H1 (cell line): ENCODE measurements at regions of chr12 and their contacts with region 1.

Region 1: DNA sequence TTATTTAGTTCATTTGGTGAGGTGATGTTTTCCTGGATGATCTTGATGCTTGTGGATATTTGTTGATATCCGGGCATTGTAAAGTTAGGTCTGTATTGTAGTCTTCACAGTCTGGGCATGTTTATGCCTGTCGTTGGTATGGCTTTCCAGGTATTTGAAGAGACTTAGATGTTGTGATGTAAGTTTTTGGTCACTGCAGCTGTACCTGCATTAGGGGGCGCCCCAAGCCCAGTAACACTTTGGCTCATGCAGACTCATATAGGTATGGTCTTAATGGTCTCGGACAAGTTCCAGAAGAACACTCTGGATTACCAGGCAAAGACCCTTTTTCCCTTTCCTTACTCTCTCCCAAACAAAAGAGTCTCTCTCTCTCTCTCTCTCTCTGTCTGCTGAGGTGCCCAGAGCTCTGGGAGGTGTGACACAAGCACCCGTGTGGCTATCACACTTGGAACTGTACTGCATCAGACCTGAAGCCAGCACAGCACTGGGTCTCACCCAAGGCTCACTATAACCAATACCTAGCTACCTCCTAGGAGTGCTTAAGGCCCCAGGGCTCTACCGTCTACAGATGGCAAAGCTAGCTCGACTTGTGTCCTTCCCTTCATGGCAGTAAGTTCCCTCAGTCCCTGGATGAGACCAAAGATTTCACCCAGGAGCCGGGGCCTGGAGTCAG is 425.8 kb upstream of the ATXN7L3B start:
- DNase-seq: peak; percentile 36 to 66
- H3K4me3 ChIP-seq: no peak overlapping the region
- H3K27ac ChIP-seq: no peak overlapping the region
- H3K4me1 ChIP-seq: no peaks in the 10 kb centered on the region
- H3K27me3 ChIP-seq: no peaks in the 10 kb centered on the region
- CTCF ChIP-seq: peak; percentile 54 to 86 (median 84)
- EP300 ChIP-seq: no peak
- POLR2A ChIP-seq: no peak
- RAD21 ChIP-seq: peak; percentile 95

Region 2: GRCh38 chr12:74085571-74085970 is 26.3 kb before region 1 on chr12:
- CTCF ChIA-PET with region 1: no interaction called
- POLR2A ChIA-PET with region 1: no interaction called
- DNase-seq: no peak
- H3K4me3 ChIP-seq: no peak overlapping the region
- H3K27ac ChIP-seq: no peak overlapping the region
- H3K4me1 ChIP-seq: no peaks in the 10 kb centered on the region
- H3K27me3 ChIP-seq: no peaks in the 10 kb centered on the region
- CTCF ChIP-seq: no peak
- EP300 ChIP-seq: no peak
- POLR2A ChIP-seq: no peak
- RAD21 ChIP-seq: no peak

Region 3: DNA sequence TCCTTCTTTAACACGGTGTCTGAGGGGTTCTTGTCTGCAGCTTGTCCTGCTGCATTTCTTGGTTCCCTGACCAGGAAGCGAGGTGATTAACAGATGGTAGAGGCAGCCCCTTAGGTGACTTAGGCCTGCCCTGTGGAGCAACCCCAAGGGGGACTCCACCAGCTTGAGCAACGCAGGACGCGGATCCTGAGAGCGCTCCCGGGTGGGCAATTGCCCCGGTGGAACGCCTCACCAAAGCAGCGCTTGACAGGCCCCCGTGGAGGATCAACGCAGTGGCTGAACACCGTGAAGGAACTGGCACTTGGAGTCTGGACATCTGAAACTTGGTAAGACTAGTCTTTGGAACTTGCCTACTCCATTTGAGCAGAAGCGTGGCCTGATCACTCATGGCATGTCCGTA is 152.9 kb after region 1 on chr12:
- CTCF ChIA-PET with region 1: interaction called, 11 read pairs
- POLR2A ChIA-PET with region 1: no interaction called
- DNase-seq: no peak
- H3K4me3 ChIP-seq: no peak overlapping the region
- H3K27ac ChIP-seq: no peak overlapping the region
- H3K4me1 ChIP-seq: peaks cover 0 to 2% (median under 1%) of the 10 kb centered on the region in 4 experiments; a peak in 3 of 7 replicates
- H3K27me3 ChIP-seq: no peaks in the 10 kb centered on the region
- CTCF ChIP-seq: no peak
- EP300 ChIP-seq: no peak
- POLR2A ChIP-seq: no peak
- RAD21 ChIP-seq: no peak

Region 4: GRCh38 chr12:74317078-74317601 is 205.3 kb after region 1 on chr12:
- CTCF ChIA-PET with region 1: interaction called, 143 read pairs
- POLR2A ChIA-PET with region 1: no interaction called
- DNase-seq: no peak
- H3K4me3 ChIP-seq: no peak overlapping the region
- H3K27ac ChIP-seq: no peak overlapping the region
- H3K4me1 ChIP-seq: peaks cover 0 to 4% (median 0%) of the 10 kb centered on the region in 4 experiments; a peak in 1 of 7 replicates
- H3K27me3 ChIP-seq: no peaks in the 10 kb centered on the region
- CTCF ChIP-seq: peak; percentile 15 to 71 (median 67)
- EP300 ChIP-seq: no peak
- POLR2A ChIP-seq: no peak
- RAD21 ChIP-seq: peak; percentile 89 to 93

Region 5: DNA sequence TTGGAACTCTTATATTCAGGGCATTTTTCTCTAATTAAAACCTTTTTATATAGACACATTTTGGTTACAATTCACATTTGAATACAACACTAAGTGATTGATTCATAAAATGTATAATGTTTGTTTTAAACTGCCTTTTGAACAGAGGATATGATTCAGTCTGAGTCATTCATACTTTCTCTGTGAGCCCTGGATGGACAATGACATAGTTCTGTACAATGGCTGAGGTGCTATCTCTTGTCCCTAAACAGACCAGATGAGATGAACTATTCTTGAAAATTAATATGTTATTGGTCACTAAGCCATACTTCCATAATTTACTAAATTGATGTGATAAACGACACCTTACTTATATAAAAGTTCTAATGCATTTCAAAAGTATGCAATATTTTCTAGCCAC is 226.1 kb after region 1 on chr12:
- CTCF ChIA-PET with region 1: no interaction called
- POLR2A ChIA-PET with region 1: no interaction called
- DNase-seq: no peak
- H3K4me3 ChIP-seq: no peak overlapping the region
- H3K27ac ChIP-seq: no peak overlapping the region
- H3K4me1 ChIP-seq: no peaks in the 10 kb centered on the region; a peak in 2 of 7 replicates
- H3K27me3 ChIP-seq: no peaks in the 10 kb centered on the region
- CTCF ChIP-seq: no peak
- EP300 ChIP-seq: no peak
- POLR2A ChIP-seq: no peak
- RAD21 ChIP-seq: no peak

Region 6: GRCh38 chr12:74365178-74365964 is 253.5 kb after region 1 on chr12:
- CTCF ChIA-PET with region 1: interaction called, 11 read pairs
- POLR2A ChIA-PET with region 1: no interaction called
- DNase-seq: peak in 1 of 2 experiments; percentile 60
- H3K4me3 ChIP-seq: no peak overlapping the region
- H3K27ac ChIP-seq: no peak overlapping the region
- H3K4me1 ChIP-seq: no peaks in the 10 kb centered on the region
- H3K27me3 ChIP-seq: no peaks in the 10 kb centered on the region
- CTCF ChIP-seq: peak; percentile 43 to 73 (median 61)
- EP300 ChIP-seq: no peak
- POLR2A ChIP-seq: no peak
- RAD21 ChIP-seq: peak; percentile 81 to 87

Region 7: GRCh38 chr12:74415633-74416032 is 303.8 kb after region 1 on chr12:
- CTCF ChIA-PET with region 1: interaction called, 68 read pairs
- POLR2A ChIA-PET with region 1: no interaction called
- DNase-seq: no peak
- H3K4me3 ChIP-seq: no peak overlapping the region
- H3K27ac ChIP-seq: no peak overlapping the region
- H3K4me1 ChIP-seq: no peaks in the 10 kb centered on the region
- H3K27me3 ChIP-seq: no peaks in the 10 kb centered on the region
- CTCF ChIP-seq: peak in 2 of 3 experiments; percentile 49 to 54; a peak in 3 of 4 replicates
- EP300 ChIP-seq: no peak
- POLR2A ChIP-seq: no peak
- RAD21 ChIP-seq: peak; percentile 63 to 70

Region 8: GRCh38 chr12:74646831-74647230 is 535.0 kb after region 1 on chr12:
- CTCF ChIA-PET with region 1: interaction called, 13 read pairs
- POLR2A ChIA-PET with region 1: no interaction called
- DNase-seq: no peak
- H3K4me3 ChIP-seq: no peak overlapping the region
- H3K27ac ChIP-seq: no peak overlapping the region
- H3K4me1 ChIP-seq: no peaks in the 10 kb centered on the region
- H3K27me3 ChIP-seq: no peaks in the 10 kb centered on the region
- CTCF ChIP-seq: peak in 1 of 3 experiments; percentile 24; a peak in 1 of 4 replicates
- EP300 ChIP-seq: no peak
- POLR2A ChIP-seq: no peak
- RAD21 ChIP-seq: peak; percentile 62